Naive thymus-derived CD4-positive, alpha-beta T cell (primary cell): ENCODE measurements at regions of chr12 and their contacts with region 1.

Region 1: DNA sequence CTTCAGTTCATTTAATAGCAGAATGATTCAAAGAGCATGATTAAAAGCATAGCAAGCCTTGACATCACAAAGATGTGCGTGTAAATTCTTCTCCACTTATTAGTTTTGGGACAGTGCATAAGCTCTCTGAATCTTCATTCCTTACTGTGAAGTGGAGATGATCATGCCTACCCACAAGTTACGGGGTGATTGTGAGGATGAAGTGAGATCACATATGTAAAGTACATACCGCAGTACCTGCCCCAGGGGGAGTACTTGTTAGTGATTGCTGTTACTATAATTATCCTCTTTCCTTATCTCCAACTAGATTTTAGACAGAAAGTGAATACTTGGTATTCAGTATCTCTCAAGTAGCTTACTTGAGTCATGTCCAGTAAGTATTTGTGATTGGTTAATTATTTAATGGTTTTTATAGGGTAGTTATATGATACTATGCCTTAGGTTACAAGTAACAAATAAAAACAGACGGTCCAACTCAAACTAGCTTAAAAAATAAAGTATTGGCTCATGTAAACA is 6.0 kb downstream of the RAD9B start:
- DNase-seq: no peak
- ATAC-seq: no peak
- H3K4me3 ChIP-seq: no peak overlapping the region
- H3K4me3 Mint-ChIP-seq: no peak overlapping the region
- H3K27ac ChIP-seq: no peak overlapping the region
- H3K27ac Mint-ChIP-seq: no peak overlapping the region
- H3K4me1 ChIP-seq: no peaks in the 10 kb centered on the region
- H3K4me1 Mint-ChIP-seq: peaks cover 0 to 3% (median 0%) of the 10 kb centered on the region in 7 donors
- H3K27me3 ChIP-seq: no peaks in the 10 kb centered on the region
- H3K27me3 Mint-ChIP-seq: peaks cover 0 to 5% (median 0%) of the 10 kb centered on the region in 5 donors

Region 2: GRCh38 chr12:110555577-110556406 is 47.7 kb after region 1 on chr12:
- CTCF ChIA-PET with region 1: interaction called, 8 read pairs
- POLR2A ChIA-PET with region 1: no interaction called
- intact Hi-C with region 1: loop called in 1 of 2 experiments (anchors 1 kb)
- DNase-seq: no peak
- ATAC-seq: no peak
- H3K4me3 ChIP-seq: no peak overlapping the region
- H3K4me3 Mint-ChIP-seq: peak overlapping the region in 3 of 10 donors; percentile 5 to 49 (median 18)
- H3K27ac ChIP-seq: no peak overlapping the region
- H3K27ac Mint-ChIP-seq: peak overlapping the region in 6 of 9 donors; percentile 1 to 77 (median 43)
- H3K4me1 ChIP-seq: peaks cover 0 to 18% of the 10 kb centered on the region in 2 donors
- H3K4me1 Mint-ChIP-seq: peaks cover 32 to 75% (median 63%) of the 10 kb centered on the region in 7 donors
- H3K27me3 ChIP-seq: no peaks in the 10 kb centered on the region
- H3K27me3 Mint-ChIP-seq: no peaks in the 10 kb centered on the region

Region 3: DNA sequence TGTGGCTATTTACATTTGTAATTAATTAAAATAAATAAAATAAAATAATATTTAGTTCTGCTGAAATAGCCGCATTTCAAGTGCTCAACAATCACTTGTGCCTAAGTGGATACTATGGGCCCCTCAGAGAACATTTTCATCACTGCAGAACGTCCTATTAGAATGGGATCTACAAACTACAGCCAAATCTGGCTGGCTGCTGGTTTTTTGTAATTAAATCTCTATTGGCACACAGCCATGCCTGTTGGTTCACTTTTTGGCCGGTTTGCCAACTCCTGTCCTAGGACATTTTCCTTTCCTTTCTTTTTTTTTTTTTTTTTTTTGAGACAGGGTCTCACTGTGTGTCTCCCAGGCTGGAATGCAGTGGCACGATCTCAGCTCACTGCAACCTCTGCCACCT is 348.4 kb after region 1 on chr12:
- CTCF ChIA-PET with region 1: interaction called, 10 read pairs
- POLR2A ChIA-PET with region 1: no interaction called
- intact Hi-C with region 1: no loop called
- DNase-seq: no peak
- ATAC-seq: no peak
- H3K4me3 ChIP-seq: no peak overlapping the region
- H3K4me3 Mint-ChIP-seq: no peak overlapping the region
- H3K27ac ChIP-seq: no peak overlapping the region
- H3K27ac Mint-ChIP-seq: no peak overlapping the region
- H3K4me1 ChIP-seq: no peaks in the 10 kb centered on the region
- H3K4me1 Mint-ChIP-seq: peaks cover 5 to 10% (median 8%) of the 10 kb centered on the region in 7 donors
- H3K27me3 ChIP-seq: no peaks in the 10 kb centered on the region
- H3K27me3 Mint-ChIP-seq: peaks cover 0 to 10% (median 7%) of the 10 kb centered on the region in 5 donors